CD8-positive, alpha-beta T cell (primary cell): ENCODE measurements at regions of chr11 and their contacts with region 1.

Region 1: DNA sequence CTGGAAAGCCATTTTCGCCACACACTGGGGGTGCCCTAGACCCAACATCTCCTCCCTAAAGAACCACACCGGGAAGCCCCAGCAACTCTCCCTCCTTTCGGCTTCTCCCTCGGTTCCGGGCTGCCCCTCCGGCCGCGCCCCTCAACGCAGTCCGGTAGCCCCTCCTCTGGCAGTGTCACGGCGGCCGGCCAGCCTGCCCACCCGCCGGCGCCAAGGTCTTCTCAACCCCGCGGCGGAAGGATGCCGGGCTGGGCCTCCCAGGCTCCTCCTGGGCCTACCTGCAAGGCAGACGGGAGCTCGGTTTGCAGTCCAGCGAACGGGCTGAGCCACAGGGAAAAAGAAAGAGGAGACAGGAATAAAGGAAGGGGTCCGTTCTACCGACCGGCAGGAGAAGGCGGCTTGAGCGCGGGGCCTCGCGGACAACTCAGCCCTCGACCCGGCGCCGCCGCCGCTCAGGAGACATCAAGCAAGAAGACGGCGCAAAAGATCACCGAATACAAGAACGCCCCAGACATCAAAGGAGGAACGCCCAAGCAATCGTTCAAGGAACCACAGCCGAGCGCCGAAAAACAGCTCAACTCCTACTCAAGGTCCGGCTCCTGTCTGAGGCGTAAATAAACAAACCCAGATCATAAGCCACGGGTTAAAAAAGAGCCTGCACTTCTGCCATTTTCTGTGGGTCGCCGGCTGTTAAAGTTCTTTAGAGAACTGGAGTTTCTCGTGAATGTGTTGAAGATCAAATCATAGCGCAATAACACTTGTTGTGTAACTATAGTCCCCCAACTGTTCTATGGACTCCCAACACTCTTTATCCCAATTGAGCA is at the start of gene AMBRA1:
- DNase-seq: peak; percentile 70 to 91 (median 81)
- ATAC-seq: peak; percentile 90
- H3K4me3 ChIP-seq: peak within 1 kb of the TSS; percentile 67 to 80
- H3K4me3 Mint-ChIP-seq: peak within 1 kb of the TSS; percentile 98
- H3K27ac ChIP-seq: peak within 1 kb of the TSS; percentile 57 to 67
- H3K27ac Mint-ChIP-seq: peak within 1 kb of the TSS; percentile 96
- H3K4me1 ChIP-seq: peaks cover 32% of the 10 kb centered on the region
- H3K4me1 Mint-ChIP-seq: peaks cover 43% of the 10 kb centered on the region
- H3K27me3 ChIP-seq: no peaks in the 10 kb centered on the region
- H3K27me3 Mint-ChIP-seq: no peaks in the 10 kb centered on the region
- CTCF ChIP-seq: no peak
- total RNA-seq, gene AMBRA1: 31.2 to 34.1 TPM

Region 2: DNA sequence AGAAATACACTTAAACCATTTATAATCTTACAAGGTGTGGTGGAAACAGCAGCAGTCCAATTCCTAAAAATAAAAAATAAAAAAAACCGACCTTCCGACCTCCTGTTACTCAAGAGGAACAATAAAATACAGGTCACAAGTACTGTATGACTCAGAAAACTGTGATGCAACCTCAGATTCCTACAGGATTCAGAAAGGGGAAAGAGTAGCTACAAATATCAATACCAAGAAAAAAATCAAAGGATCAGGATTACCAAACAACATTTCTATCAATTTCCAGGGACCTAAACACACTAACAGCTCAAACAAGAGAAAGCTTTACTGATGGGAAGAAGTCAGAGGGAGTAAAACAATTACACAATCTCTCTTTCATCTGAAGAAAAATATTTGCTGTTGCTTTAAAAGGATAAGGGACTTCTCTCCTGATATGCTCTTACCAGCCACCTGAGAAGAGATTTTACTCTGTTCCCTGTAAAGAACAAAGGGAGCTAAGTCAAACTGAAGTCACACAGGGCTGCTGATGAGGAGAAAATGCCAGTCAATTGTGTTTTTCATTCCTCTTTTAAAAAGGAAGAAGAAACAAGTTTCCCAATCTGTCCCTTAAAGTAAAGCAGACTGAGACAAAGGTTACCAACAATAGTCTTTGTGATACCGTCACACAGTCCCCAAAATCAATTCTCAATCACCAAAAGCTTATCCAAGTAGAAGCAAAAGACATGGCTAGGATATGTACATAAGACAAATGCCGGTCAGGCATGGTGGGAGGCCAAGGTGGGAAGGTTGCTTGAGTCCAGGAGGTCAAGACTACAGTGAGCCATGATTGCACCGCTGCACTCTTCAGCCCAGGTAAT is 39.3 kb before region 1 on chr11:
- CTCF ChIA-PET with region 1: no interaction called
- POLR2A ChIA-PET with region 1: no interaction called
- intact Hi-C with region 1: loop called in 1 of 2 experiments (anchors 5 kb)
- DNase-seq: no peak
- ATAC-seq: no peak
- H3K4me3 ChIP-seq: no peak overlapping the region
- H3K4me3 Mint-ChIP-seq: no peak overlapping the region
- H3K27ac ChIP-seq: no peak overlapping the region
- H3K27ac Mint-ChIP-seq: peak overlapping the region; percentile 15
- H3K4me1 ChIP-seq: peaks cover 26% of the 10 kb centered on the region
- H3K4me1 Mint-ChIP-seq: peaks cover 56% of the 10 kb centered on the region
- H3K27me3 ChIP-seq: no peaks in the 10 kb centered on the region
- H3K27me3 Mint-ChIP-seq: no peaks in the 10 kb centered on the region
- CTCF ChIP-seq: no peak